ENCODE measurements at regions of chr4 and their contacts with region 1.

Region 1: DNA sequence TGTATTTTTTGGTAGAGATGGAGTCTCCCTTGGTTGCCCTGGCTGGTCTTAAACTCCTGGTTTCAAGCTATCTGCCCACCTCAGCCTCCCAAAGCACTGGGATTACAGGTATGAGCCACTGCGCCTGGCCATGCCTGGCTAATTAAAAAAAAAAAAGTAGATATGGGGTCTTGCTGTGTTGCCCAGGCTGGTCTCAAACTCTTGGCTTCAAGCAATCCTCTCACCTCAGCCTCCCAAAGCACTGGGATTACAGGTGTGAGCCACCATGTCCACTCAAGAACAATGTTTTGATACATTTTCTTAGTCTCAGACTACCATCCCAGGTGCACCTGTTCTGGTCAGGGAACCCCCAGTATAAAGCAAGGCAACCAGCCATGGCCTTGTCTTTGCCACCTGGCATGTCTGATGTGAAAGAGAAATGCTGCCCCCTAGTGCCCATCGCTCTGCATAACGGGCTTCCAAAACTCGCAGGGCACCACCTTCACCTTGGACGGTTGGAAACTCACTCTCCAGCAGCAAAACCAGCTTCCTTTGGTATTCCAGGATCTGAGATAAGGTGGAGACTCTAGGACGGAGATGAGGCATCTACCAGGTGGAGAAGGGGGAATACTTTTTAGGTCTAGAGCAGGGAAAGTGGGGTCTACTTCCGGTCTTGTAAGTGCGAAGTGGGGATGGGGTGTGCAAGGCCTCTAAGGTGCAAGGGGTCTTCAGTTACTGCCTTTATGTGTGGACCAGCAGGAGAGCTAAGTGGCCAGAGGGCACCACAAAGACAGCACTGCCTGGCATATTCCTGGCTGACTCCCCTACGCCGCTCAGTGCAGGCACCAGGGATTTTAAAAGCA is 47.7 kb upstream of the AFAP1 start:
- DNase-seq: peak; percentile 74
- H3K4me3 ChIP-seq: no peak overlapping the region
- H3K27ac ChIP-seq: no peak overlapping the region
- H3K4me1 ChIP-seq: peaks cover 12% of the 10 kb centered on the region
- H3K27me3 ChIP-seq: no peaks in the 10 kb centered on the region
- CTCF ChIP-seq: peak; percentile 84 to 86
- POLR2A ChIP-seq: no peak

Region 2: GRCh38 chr4:7719354-7720174 is 267.8 kb before region 1 on chr4:
- CTCF ChIA-PET with region 1: interaction called, 8 read pairs
- POLR2A ChIA-PET with region 1: no interaction called
- dilution Hi-C with region 1: no loop called
- intact Hi-C with region 1: loop called (anchors 1 kb)
- DNase-seq: peak; percentile 24
- H3K4me3 ChIP-seq: no peak overlapping the region
- H3K27ac ChIP-seq: no peak overlapping the region
- H3K4me1 ChIP-seq: peaks cover 10% of the 10 kb centered on the region
- H3K27me3 ChIP-seq: peaks cover 0 to 1% of the 10 kb centered on the region in 2 experiments
- CTCF ChIP-seq: peak; percentile 75 to 83
- POLR2A ChIP-seq: no peak

Region 3: GRCh38 chr4:7770224-7771050 is 216.9 kb before region 1 on chr4:
- CTCF ChIA-PET with region 1: interaction called, 5 read pairs
- POLR2A ChIA-PET with region 1: no interaction called
- dilution Hi-C with region 1: no loop called
- intact Hi-C with region 1: loop called (anchors 1 kb)
- DNase-seq: peak; percentile 14
- H3K4me3 ChIP-seq: no peak overlapping the region
- H3K27ac ChIP-seq: no peak overlapping the region
- H3K4me1 ChIP-seq: no peaks in the 10 kb centered on the region
- H3K27me3 ChIP-seq: no peaks in the 10 kb centered on the region
- CTCF ChIP-seq: peak; percentile 47 to 61
- POLR2A ChIP-seq: no peak

Region 4: GRCh38 chr4:7876201-7876875 is 111.0 kb before region 1 on chr4:
- CTCF ChIA-PET with region 1: interaction called, 17 read pairs
- POLR2A ChIA-PET with region 1: no interaction called
- dilution Hi-C with region 1: no loop called
- intact Hi-C with region 1: loop called (anchors 1 kb)
- DNase-seq: peak; percentile 75
- H3K4me3 ChIP-seq: no peak overlapping the region
- H3K27ac ChIP-seq: peak overlapping the region; percentile 30
- H3K4me1 ChIP-seq: peaks cover 55% of the 10 kb centered on the region
- H3K27me3 ChIP-seq: no peaks in the 10 kb centered on the region
- CTCF ChIP-seq: peak; percentile 44 to 57
- POLR2A ChIP-seq: peak; percentile 34

Region 5: DNA sequence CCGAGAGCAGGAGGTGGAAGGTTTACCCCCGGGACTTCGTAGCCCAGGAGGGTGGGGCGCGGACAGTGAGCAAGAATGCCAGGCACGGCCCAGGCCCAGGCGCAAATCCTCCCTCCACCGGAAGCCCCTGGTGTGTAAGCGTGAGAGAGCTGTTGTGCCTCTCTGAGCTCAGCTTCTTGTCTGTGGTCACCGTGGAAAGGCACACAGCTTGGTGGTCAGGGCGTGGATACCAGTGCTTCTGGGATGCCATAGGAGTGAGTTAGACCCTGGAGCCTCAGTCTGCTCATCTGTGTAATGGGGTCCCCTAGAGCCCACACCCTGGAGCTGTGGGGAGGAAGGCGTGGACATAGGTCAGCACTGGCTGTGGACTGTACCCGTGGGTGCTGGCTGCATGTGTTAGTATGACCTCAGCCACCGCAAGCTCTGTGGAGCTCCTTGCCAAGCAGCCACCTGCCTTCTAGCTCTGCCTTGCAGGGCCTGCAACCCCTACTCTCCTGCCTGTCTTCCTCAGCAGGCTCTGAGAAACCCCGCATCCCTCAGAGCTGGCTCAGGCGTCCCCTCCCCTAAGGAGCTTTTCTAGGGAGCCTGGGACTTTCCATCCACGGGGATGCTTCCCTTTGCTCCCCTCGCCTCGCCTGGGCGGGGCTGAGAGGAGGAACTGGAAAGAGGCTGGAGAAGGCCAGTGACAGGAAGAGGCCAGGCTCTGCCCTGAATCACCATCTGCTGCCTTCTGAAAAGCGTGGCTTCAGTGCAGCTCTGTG is 19.7 kb before region 1 on chr4:
- CTCF ChIA-PET with region 1: interaction called, 3 read pairs
- POLR2A ChIA-PET with region 1: no interaction called
- dilution Hi-C with region 1: no loop called
- intact Hi-C with region 1: loop called (anchors 1 kb)
- DNase-seq: peak; percentile 74
- H3K4me3 ChIP-seq: no peak overlapping the region
- H3K27ac ChIP-seq: peak overlapping the region; percentile 89
- H3K4me1 ChIP-seq: peaks cover 48% of the 10 kb centered on the region
- H3K27me3 ChIP-seq: no peaks in the 10 kb centered on the region
- CTCF ChIP-seq: no peak
- POLR2A ChIP-seq: no peak

Measured in endothelial cell of umbilical vein (primary cell).